B cell (primary cell): ENCODE measurements at regions of chr11 and their contacts with region 1.

Region 1: DNA sequence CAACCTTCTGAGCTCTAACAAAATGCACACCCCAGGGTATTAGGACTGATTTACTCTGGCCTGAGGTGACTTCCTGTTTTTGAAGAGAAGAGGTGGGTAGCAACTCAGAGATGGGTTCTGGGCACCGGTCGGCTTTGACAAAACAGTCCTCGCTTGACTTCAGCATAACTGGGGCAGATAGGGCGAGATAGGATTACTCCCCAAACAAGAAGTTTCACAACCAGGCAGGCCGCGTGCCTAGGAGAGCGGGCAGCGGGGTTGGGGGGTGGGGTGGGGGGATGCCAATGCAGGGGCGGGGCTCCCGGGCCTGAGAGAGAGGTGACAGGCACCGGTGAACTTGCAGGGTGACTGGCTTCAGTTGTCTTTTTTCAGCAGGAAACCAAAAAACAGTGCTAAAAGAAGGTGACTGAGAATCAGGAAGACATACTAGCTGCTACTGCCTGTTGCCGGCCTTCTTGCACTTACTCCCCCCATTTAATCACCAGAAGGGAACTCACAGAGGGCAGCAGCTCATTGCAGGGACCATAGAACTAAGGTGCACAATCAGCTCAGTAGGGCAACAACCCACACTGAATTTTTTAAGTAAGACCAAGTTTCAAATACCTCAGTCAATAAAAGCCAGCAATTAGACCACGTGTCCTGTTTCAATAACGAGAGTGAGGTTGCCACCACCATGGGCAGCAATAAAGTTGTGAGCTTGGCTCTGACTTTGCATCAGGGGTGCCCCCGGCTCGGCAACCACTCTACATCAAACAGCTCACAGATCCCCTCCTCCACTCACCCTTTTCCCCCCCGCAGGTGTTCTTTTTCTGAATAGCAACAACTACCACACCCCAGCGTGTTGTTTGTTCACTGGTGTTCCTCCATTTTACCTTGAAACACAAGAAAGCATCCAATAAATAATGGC is 37.2 kb upstream of the ETS1 start:
- DNase-seq: peak; percentile 92
- ATAC-seq: peak; percentile 85
- H3K4me3 ChIP-seq: peak overlapping the region in 2 of 5 experiments; percentile 3 to 43
- H3K4me3 Mint-ChIP-seq: peak overlapping the region; percentile 77
- H3K27ac ChIP-seq: peak overlapping the region; percentile 90 to 93
- H3K27ac Mint-ChIP-seq: peak overlapping the region; percentile 99
- H3K4me1 ChIP-seq: peaks cover 98% of the 10 kb centered on the region in 2 donors
- H3K4me1 Mint-ChIP-seq: peaks cover 96% of the 10 kb centered on the region
- H3K27me3 ChIP-seq: no peaks in the 10 kb centered on the region
- H3K27me3 Mint-ChIP-seq: no peaks in the 10 kb centered on the region
- CTCF ChIP-seq: no peak

Region 2: DNA sequence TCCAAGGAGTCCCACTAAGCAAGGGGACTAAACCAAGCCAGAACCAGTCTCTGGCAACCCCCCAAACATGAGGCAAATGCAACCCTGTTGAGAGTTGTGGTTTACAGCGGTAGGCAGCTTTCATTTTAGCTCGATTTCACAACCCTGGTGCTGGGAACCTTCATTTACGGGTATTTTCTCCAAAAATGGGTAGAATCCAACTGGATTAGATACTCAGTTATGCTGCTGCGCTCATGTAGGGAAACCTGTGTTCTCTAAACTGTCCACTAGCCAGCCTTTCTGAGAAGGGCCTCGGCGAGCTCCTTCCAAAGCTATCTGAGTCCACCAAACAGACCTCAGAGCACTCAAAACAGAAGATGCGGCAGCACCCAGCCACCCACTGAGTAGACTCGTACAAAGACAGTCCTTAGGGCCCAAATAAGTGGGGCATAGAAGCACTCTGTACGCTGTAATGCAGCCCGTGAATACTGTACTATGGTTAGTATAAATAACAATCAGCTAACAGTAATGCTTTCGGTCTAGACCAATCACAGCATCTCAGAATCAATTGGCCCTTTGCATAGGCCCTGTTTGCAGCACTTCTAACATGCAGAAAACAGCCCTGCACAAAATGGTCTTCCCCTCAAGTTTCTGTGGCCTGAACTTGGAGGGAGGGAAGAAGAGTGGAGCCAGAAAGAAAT is 141.9 kb before region 1 on chr11:
- CTCF ChIA-PET with region 1: interaction called, 35 read pairs
- POLR2A ChIA-PET with region 1: no interaction called
- intact Hi-C with region 1: loop called (anchors 1 kb)
- DNase-seq: no peak
- ATAC-seq: peak; percentile 13
- H3K4me3 ChIP-seq: peak overlapping the region in 2 of 5 experiments; percentile 27 to 37
- H3K4me3 Mint-ChIP-seq: peak overlapping the region; percentile 61
- H3K27ac ChIP-seq: peak overlapping the region; percentile 77 to 90
- H3K27ac Mint-ChIP-seq: peak overlapping the region; percentile 95
- H3K4me1 ChIP-seq: peaks cover 82% of the 10 kb centered on the region in 2 donors
- H3K4me1 Mint-ChIP-seq: peaks cover 92% of the 10 kb centered on the region
- H3K27me3 ChIP-seq: no peaks in the 10 kb centered on the region
- H3K27me3 Mint-ChIP-seq: no peaks in the 10 kb centered on the region
- CTCF ChIP-seq: no peak

Region 3: DNA sequence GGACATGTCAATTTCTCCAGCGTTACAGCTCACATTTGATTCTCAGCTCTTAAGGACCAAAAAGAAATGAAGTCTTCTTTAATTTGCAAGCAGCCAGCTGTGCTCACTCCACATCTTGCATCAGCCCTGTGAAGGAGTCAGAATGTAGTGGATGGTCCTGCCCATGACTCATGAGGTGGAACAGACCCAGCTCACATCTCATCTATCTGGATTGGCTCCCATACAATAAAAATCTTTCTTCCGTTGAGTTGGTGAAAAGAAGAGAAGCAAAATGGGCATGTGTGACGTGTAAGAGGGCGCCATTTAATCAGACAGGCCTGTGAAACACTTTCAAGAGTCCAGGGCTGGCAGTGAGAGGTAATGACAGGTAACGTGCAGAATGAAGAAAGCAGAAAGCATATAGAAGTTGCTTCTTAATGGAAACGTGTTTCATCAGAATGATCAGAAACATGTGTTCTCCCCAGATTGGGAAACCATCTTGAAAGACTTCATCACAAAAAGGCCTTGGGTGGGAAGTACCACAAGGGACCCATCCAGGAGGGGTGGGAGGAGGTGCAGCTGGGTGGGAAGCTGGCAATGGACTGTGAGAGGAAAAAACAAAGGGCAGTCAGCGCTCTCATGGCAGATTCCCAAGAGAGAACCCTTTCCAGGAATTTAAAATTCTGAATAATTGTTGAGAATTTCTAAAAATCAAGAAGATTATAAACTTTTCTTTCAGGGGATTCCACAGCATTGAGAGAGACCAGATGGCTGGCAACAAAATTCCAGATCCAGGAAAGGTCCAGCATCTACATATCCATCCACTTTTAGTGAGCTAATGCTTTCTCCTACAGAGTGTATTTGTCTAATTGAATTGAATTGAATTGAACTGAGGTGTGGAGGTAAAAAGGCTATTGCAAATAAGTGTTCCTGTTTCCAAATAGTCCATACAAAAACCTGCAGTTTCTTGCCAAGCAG is 94.1 kb before region 1 on chr11:
- CTCF ChIA-PET with region 1: interaction called, 4 read pairs
- POLR2A ChIA-PET with region 1: interaction called, 11 read pairs
- intact Hi-C with region 1: no loop called
- DNase-seq: no peak
- ATAC-seq: no peak
- H3K4me3 ChIP-seq: no peak overlapping the region
- H3K4me3 Mint-ChIP-seq: no peak overlapping the region
- H3K27ac ChIP-seq: no peak overlapping the region
- H3K27ac Mint-ChIP-seq: no peak overlapping the region
- H3K4me1 ChIP-seq: peaks cover 11% of the 10 kb centered on the region in 2 donors
- H3K4me1 Mint-ChIP-seq: peaks cover 24% of the 10 kb centered on the region
- H3K27me3 ChIP-seq: no peaks in the 10 kb centered on the region
- H3K27me3 Mint-ChIP-seq: no peaks in the 10 kb centered on the region
- CTCF ChIP-seq: no peak

Region 4: GRCh38 chr11:128610721-128611617 is 13.6 kb before region 1 on chr11:
- CTCF ChIA-PET with region 1: interaction called, 625 read pairs
- POLR2A ChIA-PET with region 1: interaction called, 305 read pairs
- intact Hi-C with region 1: loop called (anchors 1 kb)
- DNase-seq: peak; percentile 95
- ATAC-seq: peak; percentile 89
- H3K4me3 ChIP-seq: peak overlapping the region in 3 of 5 experiments; percentile 20 to 61 (median 29)
- H3K4me3 Mint-ChIP-seq: peak overlapping the region; percentile 58
- H3K27ac ChIP-seq: peak overlapping the region; percentile 93 to 95
- H3K27ac Mint-ChIP-seq: peak overlapping the region; percentile 93
- H3K4me1 ChIP-seq: peaks cover 85 to 87% of the 10 kb centered on the region in 2 donors
- H3K4me1 Mint-ChIP-seq: peaks cover 89% of the 10 kb centered on the region
- H3K27me3 ChIP-seq: no peaks in the 10 kb centered on the region
- H3K27me3 Mint-ChIP-seq: no peaks in the 10 kb centered on the region
- CTCF ChIP-seq: no peak

Region 5: GRCh38 chr11:128643661-128644317 is 19.3 kb after region 1 on chr11:
- CTCF ChIA-PET with region 1: no interaction called
- POLR2A ChIA-PET with region 1: no interaction called
- intact Hi-C with region 1: no loop called
- DNase-seq: no peak
- ATAC-seq: no peak
- H3K4me3 ChIP-seq: no peak overlapping the region
- H3K4me3 Mint-ChIP-seq: no peak overlapping the region
- H3K27ac ChIP-seq: no peak overlapping the region
- H3K27ac Mint-ChIP-seq: no peak overlapping the region
- H3K4me1 ChIP-seq: no peaks in the 10 kb centered on the region
- H3K4me1 Mint-ChIP-seq: peaks cover 16% of the 10 kb centered on the region
- H3K27me3 ChIP-seq: no peaks in the 10 kb centered on the region
- H3K27me3 Mint-ChIP-seq: no peaks in the 10 kb centered on the region
- CTCF ChIP-seq: no peak

Region 6: GRCh38 chr11:129209891-129210830 is 585.6 kb after region 1 on chr11:
- CTCF ChIA-PET with region 1: no interaction called
- POLR2A ChIA-PET with region 1: no interaction called
- intact Hi-C with region 1: no loop called
- DNase-seq: no peak
- ATAC-seq: no peak
- H3K4me3 ChIP-seq: no peak overlapping the region
- H3K4me3 Mint-ChIP-seq: no peak overlapping the region
- H3K27ac ChIP-seq: no peak overlapping the region
- H3K27ac Mint-ChIP-seq: no peak overlapping the region
- H3K4me1 ChIP-seq: no peaks in the 10 kb centered on the region
- H3K4me1 Mint-ChIP-seq: peaks cover 1% of the 10 kb centered on the region
- H3K27me3 ChIP-seq: no peaks in the 10 kb centered on the region
- H3K27me3 Mint-ChIP-seq: peaks cover 6% of the 10 kb centered on the region
- CTCF ChIP-seq: no peak